HCT116 (cell line): ENCODE measurements at regions of chr2 and their contacts with region 1.

Region 1: GRCh38 chr2:43293744-43294695 is 67.6 kb upstream of the ZFP36L2 start:
- DNase-seq: peak; percentile 97
- ATAC-seq: peak; percentile 91
- H3K4me3 ChIP-seq: peak overlapping the region in 1 of 2 experiments; percentile 4; a peak in 1 of 4 replicates
- H3K27ac ChIP-seq: peak overlapping the region; percentile 68
- H3K4me1 ChIP-seq: peaks cover 45 to 58% of the 10 kb centered on the region in 2 experiments
- H3K27me3 ChIP-seq: no peaks in the 10 kb centered on the region
- CTCF ChIP-seq: no peak
- POLR2A ChIP-seq: no peak
- RAD21 ChIP-seq: peak; percentile 35; the same call in 1 of the 2 replicates

Region 2: DNA sequence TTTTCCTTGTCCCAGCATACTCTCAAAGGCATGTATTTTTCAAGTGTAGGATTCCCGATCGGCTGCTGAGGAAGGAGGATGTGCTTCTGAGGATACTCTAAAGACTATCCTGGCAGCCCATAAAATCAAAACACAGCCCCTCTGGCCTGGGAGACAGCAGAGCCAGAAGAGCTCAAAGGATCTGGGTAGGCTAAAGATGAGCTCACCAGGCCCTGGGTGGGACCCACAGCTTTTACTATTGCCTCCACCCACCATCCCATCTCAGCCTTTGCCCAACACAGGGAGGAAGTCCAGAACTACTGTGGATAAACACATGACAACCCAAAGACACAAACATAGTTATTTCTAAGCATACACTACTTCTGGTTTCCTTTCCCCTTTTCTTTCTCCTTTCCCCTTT is 11.5 kb after region 1 on chr2:
- CTCF ChIA-PET with region 1: no interaction called
- POLR2A ChIA-PET with region 1: no interaction called
- RAD21 ChIA-PET with region 1: no interaction called
- intact Hi-C with region 1: no loop called
- DNase-seq: no peak
- ATAC-seq: no peak
- H3K4me3 ChIP-seq: no peak overlapping the region
- H3K27ac ChIP-seq: no peak overlapping the region
- H3K4me1 ChIP-seq: peaks cover 0 to 20% of the 10 kb centered on the region in 2 experiments; a peak in 2 of 4 replicates
- H3K27me3 ChIP-seq: no peaks in the 10 kb centered on the region
- CTCF ChIP-seq: no peak
- POLR2A ChIP-seq: no peak
- RAD21 ChIP-seq: no peak

Region 3: GRCh38 chr2:43455731-43456642 is 162.0 kb after region 1 on chr2:
- CTCF ChIA-PET with region 1: no interaction called
- POLR2A ChIA-PET with region 1: no interaction called
- RAD21 ChIA-PET with region 1: no interaction called
- intact Hi-C with region 1: loop called (anchors 10 kb)
- DNase-seq: no peak
- ATAC-seq: peak; percentile 75
- H3K4me3 ChIP-seq: no peak overlapping the region
- H3K27ac ChIP-seq: peak overlapping the region; percentile 2; the same call in 1 of the 2 replicates
- H3K4me1 ChIP-seq: peaks cover 64 to 68% of the 10 kb centered on the region in 2 experiments
- H3K27me3 ChIP-seq: no peaks in the 10 kb centered on the region
- CTCF ChIP-seq: 0 out of 6 replicates have a peak, but pooled peaks of 1 of the 3 experiments have one; percentile 10
- POLR2A ChIP-seq: no peak
- RAD21 ChIP-seq: peak; percentile 55

Region 4: GRCh38 chr2:43877782-43878464 is 583.9 kb after region 1 on chr2:
- CTCF ChIA-PET with region 1: no interaction called
- POLR2A ChIA-PET with region 1: no interaction called
- RAD21 ChIA-PET with region 1: no interaction called
- intact Hi-C with region 1: no loop called
- DNase-seq: peak; percentile 23
- ATAC-seq: peak; percentile 85
- H3K4me3 ChIP-seq: no peak overlapping the region
- H3K27ac ChIP-seq: no peak overlapping the region
- H3K4me1 ChIP-seq: 0 out of 4 replicates have a peak, but pooled peaks cover 0 to 6% of the 10 kb centered on the region in 2 experiments
- H3K27me3 ChIP-seq: 0 out of 2 replicates have a peak, but pooled peaks cover 4% of the 10 kb centered on the region
- CTCF ChIP-seq: peak; percentile 68 to 98 (median 97)
- POLR2A ChIP-seq: no peak
- RAD21 ChIP-seq: peak; percentile 93